CD14-positive monocyte (primary cell): ENCODE measurements at regions of chr19 and their contacts with region 1.

Region 1: DNA sequence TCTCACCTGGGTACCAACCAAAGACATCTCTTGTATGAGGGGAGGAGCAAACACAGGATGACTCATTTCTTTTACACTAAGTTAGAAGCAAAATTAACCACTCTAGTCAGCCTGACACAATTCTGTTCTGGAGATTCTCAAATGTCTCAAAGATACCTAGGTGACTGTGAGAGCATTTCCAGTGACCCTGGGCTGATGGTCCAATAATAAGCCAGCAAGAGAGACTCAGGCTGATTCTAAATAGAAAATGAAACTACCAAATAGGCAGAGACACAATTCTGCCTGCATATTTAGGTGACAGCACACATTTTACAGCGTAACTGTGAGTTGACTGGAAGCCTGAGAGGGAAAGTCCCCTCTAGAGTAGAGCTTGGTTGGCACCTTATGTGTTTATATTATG is 16.3 kb downstream of the ZNF91 start:
- DNase-seq: no peak
- H3K4me3 ChIP-seq: no peak overlapping the region
- H3K4me3 Mint-ChIP-seq: no peak overlapping the region
- H3K27ac ChIP-seq: no peak overlapping the region
- H3K27ac Mint-ChIP-seq: no peak overlapping the region
- H3K4me1 ChIP-seq: no peaks in the 10 kb centered on the region
- H3K4me1 Mint-ChIP-seq: no peaks in the 10 kb centered on the region
- H3K27me3 ChIP-seq: no peaks in the 10 kb centered on the region
- H3K27me3 Mint-ChIP-seq: no peaks in the 10 kb centered on the region
- CTCF ChIP-seq: no peak

Region 2: GRCh38 chr19:23318143-23318542 is 60.8 kb before region 1 on chr19:
- intact Hi-C with region 1: no loop called
- DNase-seq: no peak
- H3K4me3 ChIP-seq: no peak overlapping the region
- H3K4me3 Mint-ChIP-seq: no peak overlapping the region
- H3K27ac ChIP-seq: no peak overlapping the region
- H3K27ac Mint-ChIP-seq: no peak overlapping the region
- H3K4me1 ChIP-seq: no peaks in the 10 kb centered on the region
- H3K4me1 Mint-ChIP-seq: no peaks in the 10 kb centered on the region
- H3K27me3 ChIP-seq: no peaks in the 10 kb centered on the region
- H3K27me3 Mint-ChIP-seq: no peaks in the 10 kb centered on the region
- CTCF ChIP-seq: no peak

Region 3: GRCh38 chr19:23491421-23491820 is 112.5 kb after region 1 on chr19:
- intact Hi-C with region 1: no loop called
- DNase-seq: no peak
- H3K4me3 ChIP-seq: no peak overlapping the region
- H3K4me3 Mint-ChIP-seq: no peak overlapping the region
- H3K27ac ChIP-seq: no peak overlapping the region
- H3K27ac Mint-ChIP-seq: no peak overlapping the region
- H3K4me1 ChIP-seq: no peaks in the 10 kb centered on the region
- H3K4me1 Mint-ChIP-seq: no peaks in the 10 kb centered on the region
- H3K27me3 ChIP-seq: no peaks in the 10 kb centered on the region
- H3K27me3 Mint-ChIP-seq: no peaks in the 10 kb centered on the region
- CTCF ChIP-seq: no peak

Region 4: DNA sequence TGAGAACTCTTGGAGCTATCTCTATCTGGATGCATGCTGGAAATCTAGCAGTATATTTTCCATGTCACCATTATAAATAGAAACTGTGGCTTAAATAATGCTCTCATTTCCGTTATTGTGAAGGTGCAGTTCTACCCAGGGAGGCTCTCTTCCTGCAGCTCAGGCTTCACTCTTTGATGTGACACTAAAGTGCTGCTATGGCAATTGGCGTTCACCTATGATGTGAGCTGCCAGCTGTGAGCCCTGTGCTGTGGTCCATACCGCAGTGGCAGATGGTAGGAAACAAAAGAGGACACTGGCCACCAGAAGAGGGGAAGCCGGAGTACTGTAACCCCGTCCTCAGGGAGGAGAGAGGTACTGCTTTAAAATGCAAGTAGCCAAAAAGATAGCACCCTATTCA is 420.4 kb after region 1 on chr19:
- intact Hi-C with region 1: loop called in 1 of 2 experiments (anchors 5 kb)
- DNase-seq: no peak
- H3K4me3 ChIP-seq: no peak overlapping the region
- H3K4me3 Mint-ChIP-seq: no peak overlapping the region
- H3K27ac ChIP-seq: no peak overlapping the region
- H3K27ac Mint-ChIP-seq: no peak overlapping the region
- H3K4me1 ChIP-seq: peaks cover 0 to 4% of the 10 kb centered on the region in 2 donors
- H3K4me1 Mint-ChIP-seq: peaks cover 6% of the 10 kb centered on the region
- H3K27me3 ChIP-seq: no peaks in the 10 kb centered on the region
- H3K27me3 Mint-ChIP-seq: no peaks in the 10 kb centered on the region
- CTCF ChIP-seq: no peak